Psoas muscle (tissue), 8 donors: ENCODE measurements at regions of chr6 and their contacts with region 1.

Region 1: GRCh38 chr6:122471107-122472021 is at the start of gene SERINC1:
- DNase-seq: peak; percentile 95 to 98
- ATAC-seq: peak; percentile 98 to 99 (median 99)
- H3K4me3 ChIP-seq: peak within 1 kb of the TSS; percentile 95
- H3K27ac ChIP-seq: peak within 1 kb of the TSS; percentile 99
- H3K4me1 ChIP-seq: peaks cover 29% of the 10 kb centered on the region
- H3K27me3 ChIP-seq: no peaks in the 10 kb centered on the region
- CTCF ChIP-seq: no peak
- total RNA-seq, gene SERINC1: 140 to 196 (median 178) TPM

Region 2: GRCh38 chr6:122049341-122049740 is 422.0 kb before region 1 on chr6:
- intact Hi-C with region 1: loop called in 1 of 2 experiments (anchors 10 kb)
- DNase-seq: no peak
- ATAC-seq: peak in 1 of 4 donors; percentile 64
- H3K4me3 ChIP-seq: peak overlapping the region; percentile 33
- H3K27ac ChIP-seq: no peak overlapping the region
- H3K4me1 ChIP-seq: peaks cover 8% of the 10 kb centered on the region
- H3K27me3 ChIP-seq: peaks cover 0 to 3% (median 0%) of the 10 kb centered on the region in 3 donors
- CTCF ChIP-seq: no peak

Region 3: GRCh38 chr6:122381497-122382265 is 89.7 kb before region 1 on chr6:
- intact Hi-C with region 1: loop called in 1 of 2 experiments (anchors 2 kb)
- DNase-seq: peak; percentile 18 to 56
- ATAC-seq: peak; percentile 70 to 96 (median 84)
- H3K4me3 ChIP-seq: no peak overlapping the region
- H3K27ac ChIP-seq: no peak overlapping the region
- H3K4me1 ChIP-seq: no peaks in the 10 kb centered on the region
- H3K27me3 ChIP-seq: no peaks in the 10 kb centered on the region
- CTCF ChIP-seq: peak; percentile 77

Region 4: DNA sequence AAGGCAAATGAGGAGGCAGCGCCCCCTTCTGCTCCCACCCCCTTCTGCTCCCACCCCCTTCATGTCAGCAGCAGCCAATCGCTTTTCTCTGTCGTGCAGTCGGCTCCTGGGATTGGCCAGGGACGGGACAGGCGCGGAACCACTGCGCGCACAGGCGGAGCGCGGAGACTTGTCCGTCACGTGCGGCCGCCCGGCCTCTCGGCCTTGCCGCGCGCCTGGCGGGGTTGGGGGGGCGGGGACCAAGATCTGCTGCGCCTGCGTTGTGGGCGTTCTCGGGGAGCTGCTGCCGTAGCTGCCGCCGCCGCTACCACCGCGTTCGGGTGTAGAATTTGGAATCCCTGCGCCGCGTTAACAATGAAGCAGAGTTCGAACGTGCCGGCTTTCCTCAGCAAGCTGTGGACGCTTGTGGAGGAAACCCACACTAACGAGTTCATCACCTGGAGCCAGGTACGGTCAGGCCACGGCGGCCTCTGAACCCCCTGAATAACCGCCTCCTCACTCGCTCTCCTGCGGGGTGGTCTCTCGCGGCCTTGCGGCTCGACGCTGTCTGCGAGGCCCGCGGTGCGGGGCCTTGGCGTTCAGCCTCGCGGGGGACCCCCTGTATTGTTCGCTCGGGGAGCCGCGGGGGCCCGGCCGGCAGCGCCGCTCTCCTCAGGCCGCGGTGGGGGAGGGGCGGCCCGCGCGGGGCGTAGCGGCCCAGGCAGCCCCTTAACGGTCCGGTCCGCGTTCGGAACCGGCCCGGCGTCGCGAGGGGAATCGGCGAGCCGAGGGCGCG is 71.8 kb before region 1 on chr6 and contains the start of gene HSF2:
- intact Hi-C with region 1: loop called in 1 of 2 experiments (anchors 5 kb)
- DNase-seq: peak; percentile 96 to 98
- ATAC-seq: peak; percentile 92 to 99 (median 96)
- H3K4me3 ChIP-seq: peak within 1 kb of the TSS; percentile 95
- H3K27ac ChIP-seq: peak within 1 kb of the TSS; percentile 96
- H3K4me1 ChIP-seq: peaks cover 26% of the 10 kb centered on the region
- H3K27me3 ChIP-seq: no peaks in the 10 kb centered on the region
- CTCF ChIP-seq: peak; percentile 22
- total RNA-seq, gene HSF2: 17.9 to 58.2 (median 21.7) TPM

Region 5: DNA sequence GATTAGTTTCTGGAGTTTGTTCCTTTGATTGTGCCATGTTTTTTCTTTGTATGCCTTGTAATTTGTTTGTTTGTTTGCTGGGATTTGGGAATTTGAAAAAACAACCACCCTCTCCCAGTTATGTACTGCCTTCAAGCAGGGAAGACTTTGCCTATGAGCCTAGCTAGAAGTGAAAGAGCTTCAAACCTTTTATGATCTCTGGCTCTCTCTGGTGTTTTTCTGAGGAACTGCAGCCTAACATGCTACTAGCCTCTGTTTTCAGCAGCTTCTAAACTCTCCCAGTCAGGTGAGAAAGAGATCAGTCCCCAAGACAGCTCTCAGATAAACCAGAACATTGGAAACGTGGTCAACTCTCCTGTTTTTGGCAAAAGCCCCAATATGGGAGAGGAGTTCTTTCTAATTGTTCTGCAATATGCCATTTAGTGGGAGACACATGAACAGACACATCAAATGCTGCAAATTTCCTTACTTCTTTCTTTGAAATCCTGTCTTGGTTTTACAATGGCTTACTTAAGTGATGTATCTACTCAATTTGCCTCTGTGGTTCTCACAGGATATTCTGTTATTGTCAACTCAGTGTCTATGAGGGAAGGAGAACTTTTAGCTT is 59.2 kb after region 1 on chr6:
- intact Hi-C with region 1: loop called in 1 of 2 experiments (anchors 5 kb)
- DNase-seq: no peak
- ATAC-seq: peak; percentile 79 to 95 (median 86)
- H3K4me3 ChIP-seq: no peak overlapping the region
- H3K27ac ChIP-seq: no peak overlapping the region
- H3K4me1 ChIP-seq: no peaks in the 10 kb centered on the region
- H3K27me3 ChIP-seq: no peaks in the 10 kb centered on the region
- CTCF ChIP-seq: peak; percentile 94